CD4-positive, alpha-beta memory T cell (primary cell): ENCODE measurements at regions of chr3 and their contacts with region 1.

Region 1: DNA sequence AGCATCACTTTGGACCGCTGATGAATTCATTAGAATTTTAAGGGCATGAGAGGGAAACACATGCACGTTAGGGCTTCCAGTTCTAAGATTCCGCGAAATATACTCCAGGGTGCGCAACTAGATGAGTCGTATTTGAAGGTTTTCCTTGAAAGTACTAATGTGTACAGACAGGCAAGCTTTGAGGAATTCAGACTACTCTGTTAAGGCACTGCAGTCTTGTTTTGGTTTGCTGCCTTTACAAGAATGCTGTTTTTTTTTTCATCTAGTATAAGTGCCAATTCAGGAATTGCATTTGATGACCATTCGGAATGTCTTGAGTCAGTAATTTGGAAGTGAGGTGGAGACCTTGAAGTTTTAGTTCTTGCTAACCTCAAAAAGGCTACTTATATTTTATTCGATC is 19.1 kb downstream of the TRNT1 start:
- DNase-seq: no peak
- H3K4me3 ChIP-seq: no peak overlapping the region
- H3K4me3 Mint-ChIP-seq: no peak overlapping the region
- H3K27ac ChIP-seq: no peak overlapping the region
- H3K27ac Mint-ChIP-seq: peak overlapping the region in 4 of 7 donors; percentile 5 to 42 (median 35)
- H3K4me1 ChIP-seq: peaks cover 19% of the 10 kb centered on the region
- H3K4me1 Mint-ChIP-seq: peaks cover 9 to 39% (median 14%) of the 10 kb centered on the region in 4 donors
- H3K27me3 ChIP-seq: no peaks in the 10 kb centered on the region
- H3K27me3 Mint-ChIP-seq: no peaks in the 10 kb centered on the region

Region 2: DNA sequence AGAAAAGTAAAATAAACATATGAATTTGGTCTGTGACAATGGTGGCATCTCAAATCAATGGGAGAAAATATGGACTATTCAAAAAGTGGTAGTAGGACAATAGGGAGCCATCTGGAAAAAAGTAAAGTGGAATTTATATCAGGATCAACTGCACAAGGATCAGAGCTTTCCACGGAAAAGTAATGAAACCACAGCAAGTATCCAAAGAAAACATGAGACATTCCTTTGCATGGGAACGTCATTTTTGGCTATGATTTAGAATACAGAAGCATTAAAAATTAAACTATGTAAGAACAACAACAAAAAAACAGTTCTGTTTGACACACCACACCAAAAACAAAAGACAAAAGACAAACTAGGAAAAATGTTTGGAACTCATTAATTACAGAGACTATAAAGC is 15.0 kb after region 1 on chr3:
- CTCF ChIA-PET with region 1: no interaction called
- POLR2A ChIA-PET with region 1: interaction called, 3 read pairs
- intact Hi-C with region 1: loop called (anchors 2 kb)
- DNase-seq: no peak
- H3K4me3 ChIP-seq: no peak overlapping the region
- H3K4me3 Mint-ChIP-seq: peak overlapping the region in 1 of 8 donors; percentile 5
- H3K27ac ChIP-seq: no peak overlapping the region
- H3K27ac Mint-ChIP-seq: peak overlapping the region; percentile 11 to 86 (median 67)
- H3K4me1 ChIP-seq: peaks cover 34% of the 10 kb centered on the region
- H3K4me1 Mint-ChIP-seq: peaks cover 44 to 80% (median 63%) of the 10 kb centered on the region in 4 donors
- H3K27me3 ChIP-seq: no peaks in the 10 kb centered on the region
- H3K27me3 Mint-ChIP-seq: no peaks in the 10 kb centered on the region

Region 3: GRCh38 chr3:3278073-3278472 is 132.2 kb after region 1 on chr3:
- CTCF ChIA-PET with region 1: no interaction called
- POLR2A ChIA-PET with region 1: no interaction called
- intact Hi-C with region 1: no loop called
- DNase-seq: no peak
- H3K4me3 ChIP-seq: no peak overlapping the region
- H3K4me3 Mint-ChIP-seq: no peak overlapping the region
- H3K27ac ChIP-seq: no peak overlapping the region
- H3K27ac Mint-ChIP-seq: no peak overlapping the region
- H3K4me1 ChIP-seq: no peaks in the 10 kb centered on the region
- H3K4me1 Mint-ChIP-seq: no peaks in the 10 kb centered on the region
- H3K27me3 ChIP-seq: no peaks in the 10 kb centered on the region
- H3K27me3 Mint-ChIP-seq: peaks cover 3 to 5% of the 10 kb centered on the region in 2 donors